ENCODE measurements at regions of chr12 and their contacts with region 1.

Region 1: GRCh38 chr12:9049520-9050133 is 60.3 kb downstream of the KLRG1 start:
- DNase-seq: peak; percentile 60
- H3K4me3 Mint-ChIP-seq: no peak overlapping the region
- H3K27ac Mint-ChIP-seq: no peak overlapping the region
- H3K4me1 Mint-ChIP-seq: no peaks in the 10 kb centered on the region
- H3K27me3 Mint-ChIP-seq: peaks cover 36% of the 10 kb centered on the region
- CTCF ChIP-seq: peak; percentile 40

Region 2: DNA sequence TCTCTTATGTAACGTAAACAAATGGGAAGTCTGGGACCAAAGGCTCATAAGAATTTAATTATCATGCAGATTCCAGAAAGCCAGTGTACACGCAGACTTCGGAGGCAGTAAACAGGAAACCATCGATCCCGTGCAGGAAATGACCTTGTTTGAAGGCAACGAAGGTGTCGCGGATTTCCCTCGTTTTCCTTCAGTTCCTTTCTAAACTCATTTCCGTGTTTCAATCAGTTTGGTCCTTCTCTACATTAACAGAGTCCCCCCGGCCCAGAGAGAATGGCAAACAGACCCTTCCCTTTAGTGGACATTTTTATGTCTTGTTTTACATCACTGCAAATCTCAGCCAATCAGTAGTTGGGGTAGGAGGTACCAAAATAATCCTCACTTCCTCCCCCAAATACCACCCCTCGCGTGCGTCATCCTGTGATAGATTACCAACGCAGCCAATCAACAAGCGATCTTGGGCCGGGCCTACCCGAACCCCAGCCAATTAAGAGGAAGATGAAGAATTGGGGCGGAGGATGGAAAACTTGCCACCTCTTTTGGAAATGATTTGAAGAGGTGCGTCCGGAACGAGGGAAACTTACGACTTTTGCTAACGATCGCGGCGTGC is 1023.2 kb before region 1 on chr12:
- CTCF ChIA-PET with region 1: no interaction called
- POLR2A ChIA-PET with region 1: no interaction called
- intact Hi-C with region 1: no loop called
- DNase-seq: peak; percentile 99
- H3K4me3 Mint-ChIP-seq: peak overlapping the region; percentile 99
- H3K27ac Mint-ChIP-seq: peak overlapping the region; percentile 100
- H3K4me1 Mint-ChIP-seq: no peaks in the 10 kb centered on the region
- H3K27me3 Mint-ChIP-seq: no peaks in the 10 kb centered on the region
- CTCF ChIP-seq: no peak

Region 3: GRCh38 chr12:8681041-8681902 is 368.4 kb before region 1 on chr12:
- CTCF ChIA-PET with region 1: interaction called, 10 read pairs
- POLR2A ChIA-PET with region 1: no interaction called
- intact Hi-C with region 1: no loop called
- DNase-seq: peak; percentile 79
- H3K4me3 Mint-ChIP-seq: peak overlapping the region; percentile 67
- H3K27ac Mint-ChIP-seq: peak overlapping the region; percentile 63
- H3K4me1 Mint-ChIP-seq: peaks cover 19% of the 10 kb centered on the region
- H3K27me3 Mint-ChIP-seq: no peaks in the 10 kb centered on the region
- CTCF ChIP-seq: no peak

Region 4: GRCh38 chr12:8949342-8950220 is 100.0 kb before region 1 on chr12 and contains the start of gene M6PR:
- CTCF ChIA-PET with region 1: interaction called, 32 read pairs
- POLR2A ChIA-PET with region 1: interaction called, 12 read pairs
- intact Hi-C with region 1: no loop called
- DNase-seq: peak; percentile 97
- H3K4me3 Mint-ChIP-seq: peak within 1 kb of the TSS; percentile 100
- H3K27ac Mint-ChIP-seq: peak within 1 kb of the TSS; percentile 100
- H3K4me1 Mint-ChIP-seq: peaks cover 20% of the 10 kb centered on the region
- H3K27me3 Mint-ChIP-seq: no peaks in the 10 kb centered on the region
- CTCF ChIP-seq: peak; percentile 15
- total RNA-seq, gene M6PR: 130 and 159 TPM in 2 replicates

Region 5: DNA sequence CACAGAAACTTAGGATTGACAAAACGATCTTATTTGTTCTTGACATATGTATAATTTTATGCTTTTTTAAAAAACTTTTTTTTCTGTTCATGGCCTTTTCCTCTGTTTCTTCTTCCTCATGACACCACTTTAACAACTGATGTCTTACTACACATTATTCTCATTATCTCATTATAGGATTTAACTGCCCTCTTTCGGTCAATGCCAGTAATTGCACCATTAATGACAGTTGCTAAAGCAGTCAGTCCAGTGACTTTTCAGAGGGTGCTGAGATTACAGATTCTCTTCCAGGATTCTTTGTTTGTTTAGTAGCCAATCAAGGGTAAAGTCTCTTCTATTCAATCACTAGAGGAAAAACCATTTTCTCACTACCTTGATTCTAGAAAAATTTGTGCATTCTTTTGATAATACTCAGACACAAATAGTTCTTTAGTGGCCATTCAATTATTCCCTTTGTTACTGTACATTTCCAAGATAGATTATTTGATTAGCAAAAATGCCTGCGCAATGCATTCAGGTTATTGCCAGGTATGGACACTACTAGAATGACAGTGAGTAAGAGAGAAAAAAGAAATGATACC is 10.1 kb before region 1 on chr12:
- CTCF ChIA-PET with region 1: interaction called, 27 read pairs
- POLR2A ChIA-PET with region 1: no interaction called
- intact Hi-C with region 1: no loop called
- DNase-seq: peak; percentile 57
- H3K4me3 Mint-ChIP-seq: no peak overlapping the region
- H3K27ac Mint-ChIP-seq: no peak overlapping the region
- H3K4me1 Mint-ChIP-seq: no peaks in the 10 kb centered on the region
- H3K27me3 Mint-ChIP-seq: no peaks in the 10 kb centered on the region
- CTCF ChIP-seq: peak; percentile 78

Region 6: GRCh38 chr12:9134981-9135628 is 85.5 kb after region 1 on chr12:
- CTCF ChIA-PET with region 1: no interaction called
- POLR2A ChIA-PET with region 1: no interaction called
- intact Hi-C with region 1: no loop called
- DNase-seq: peak; percentile 16
- H3K4me3 Mint-ChIP-seq: no peak overlapping the region
- H3K27ac Mint-ChIP-seq: no peak overlapping the region
- H3K4me1 Mint-ChIP-seq: peaks cover 15% of the 10 kb centered on the region
- H3K27me3 Mint-ChIP-seq: no peaks in the 10 kb centered on the region
- CTCF ChIP-seq: peak; percentile 10

Measured in MCF 10A (cell line).